GM10248 (cell line): ENCODE measurements at regions of chr2 and their contacts with region 1.

Region 1: DNA sequence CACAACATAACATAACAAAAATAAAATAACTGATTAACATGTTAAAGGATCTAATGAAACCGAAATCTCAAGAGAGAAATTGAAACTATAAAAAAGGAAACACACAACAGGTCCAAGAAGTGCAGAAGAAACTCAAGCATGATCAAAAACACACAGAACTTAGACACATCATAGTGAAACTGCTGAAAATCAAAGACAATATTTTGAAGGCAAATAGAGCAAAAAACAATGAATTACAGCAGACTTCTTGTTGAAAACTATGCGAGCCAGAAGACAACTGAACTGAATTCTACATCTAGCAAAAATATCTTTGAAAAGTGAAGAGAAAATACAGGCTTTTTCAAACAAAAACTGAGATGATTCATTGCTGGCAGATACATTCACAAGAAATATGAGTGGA is 61.3 kb downstream of the UGP2 start:
- DNase-seq: peak; percentile 25
- CTCF ChIP-seq: no peak

Region 2: GRCh38 chr2:63914311-63914710 is 11.3 kb after region 1 on chr2:
- CTCF ChIA-PET with region 1: interaction called, 12 read pairs
- POLR2A ChIA-PET with region 1: no interaction called
- DNase-seq: no peak
- CTCF ChIP-seq: no peak